K562 (cell line): ENCODE measurements at regions of chr17 and their contacts with region 1.

Region 1: GRCh38 chr17:32253117-32253611 is 12.5 kb upstream of the RHBDL3 start:
- DNase-seq: peak; percentile 78 to 88 (median 80)
- ATAC-seq: peak; percentile 99
- H3K4me3 ChIP-seq: no peak overlapping the region
- H3K27ac ChIP-seq: no peak overlapping the region
- H3K4me1 ChIP-seq: peaks cover 0 to 4% of the 10 kb centered on the region in 2 experiments; a peak in 2 of 5 replicates
- H3K27me3 ChIP-seq: peaks cover 30 to 46% of the 10 kb centered on the region in 2 experiments
- CTCF ChIP-seq: peak; percentile 96 to 99 (median 99)
- EP300 ChIP-seq: no peak
- POLR2A ChIP-seq: no peak
- RAD21 ChIP-seq: peak; percentile 87 to 97

Region 2: DNA sequence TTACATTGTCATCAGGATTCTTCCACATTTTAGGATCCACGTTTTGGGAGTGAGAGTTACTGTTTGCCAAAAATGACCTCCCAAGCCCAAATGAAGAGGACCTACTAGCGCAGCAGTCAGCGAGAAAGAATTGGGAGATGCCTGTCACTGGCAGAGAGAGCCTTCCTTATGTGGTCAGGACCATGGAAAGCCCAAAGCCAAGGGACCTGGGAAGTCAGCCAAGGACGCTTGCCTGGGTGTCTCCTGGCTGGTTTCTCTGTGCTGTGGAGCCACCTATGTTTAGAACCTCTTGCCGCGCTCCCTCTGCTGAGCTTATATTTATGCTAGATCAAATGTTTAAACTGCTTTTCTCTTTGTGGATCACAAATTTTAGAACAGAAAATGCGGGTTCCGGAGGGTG is 12.4 kb before region 1 on chr17:
- CTCF ChIA-PET with region 1: no interaction called
- POLR2A ChIA-PET with region 1: interaction called, 10 read pairs
- in situ Hi-C with region 1: no loop called
- intact Hi-C with region 1: no loop called
- DNase-seq: peak in 1 of 4 experiments; percentile 32
- ATAC-seq: peak; percentile 54; the same call in 2 of the 3 replicates
- H3K4me3 ChIP-seq: no peak overlapping the region
- H3K27ac ChIP-seq: no peak overlapping the region
- H3K4me1 ChIP-seq: no peaks in the 10 kb centered on the region; a peak in 1 of 5 replicates
- H3K27me3 ChIP-seq: no peaks in the 10 kb centered on the region
- CTCF ChIP-seq: peak in 1 of 3 experiments; percentile 14; a peak in 1 of 6 replicates
- EP300 ChIP-seq: no peak
- POLR2A ChIP-seq: no peak
- RAD21 ChIP-seq: peak in 1 of 2 experiments; percentile 18; a peak in 1 of 4 replicates

Region 3: DNA sequence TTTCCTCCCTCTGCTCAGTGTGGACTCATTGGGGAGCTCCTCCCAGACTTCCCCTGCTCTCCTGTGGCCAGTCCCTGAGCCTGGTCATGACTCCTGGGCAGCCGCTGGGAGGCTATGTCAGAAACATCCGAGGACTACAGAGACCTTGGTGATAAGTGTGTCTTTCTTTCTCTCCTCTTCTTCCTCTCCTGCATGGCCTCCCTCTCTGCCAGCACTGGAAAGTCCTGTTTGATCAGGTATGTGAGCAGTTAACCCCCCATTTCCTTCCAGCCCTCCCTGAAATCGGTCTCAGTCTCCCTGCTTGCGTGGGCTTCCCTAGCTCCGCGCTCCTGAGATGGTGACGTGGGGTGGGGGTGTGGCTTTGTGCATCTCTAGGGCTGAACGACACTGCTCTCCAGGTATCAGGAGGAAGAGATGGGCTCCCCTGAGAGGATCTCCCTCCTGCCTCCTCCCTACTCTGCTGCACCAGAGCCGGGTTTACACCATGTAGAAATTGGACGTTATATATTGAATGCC is 14.6 kb after region 1 on chr17:
- CTCF ChIA-PET with region 1: no interaction called
- POLR2A ChIA-PET with region 1: no interaction called
- in situ Hi-C with region 1: no loop called
- intact Hi-C with region 1: no loop called
- DNase-seq: no peak
- ATAC-seq: peak; percentile 72
- H3K4me3 ChIP-seq: no peak overlapping the region
- H3K27ac ChIP-seq: no peak overlapping the region
- H3K4me1 ChIP-seq: peaks cover 0 to 15% of the 10 kb centered on the region in 2 experiments; a peak in 4 of 5 replicates
- H3K27me3 ChIP-seq: peaks cover 54 to 69% of the 10 kb centered on the region in 2 experiments
- CTCF ChIP-seq: no peak
- EP300 ChIP-seq: no peak
- POLR2A ChIP-seq: no peak
- RAD21 ChIP-seq: no peak

Region 4: DNA sequence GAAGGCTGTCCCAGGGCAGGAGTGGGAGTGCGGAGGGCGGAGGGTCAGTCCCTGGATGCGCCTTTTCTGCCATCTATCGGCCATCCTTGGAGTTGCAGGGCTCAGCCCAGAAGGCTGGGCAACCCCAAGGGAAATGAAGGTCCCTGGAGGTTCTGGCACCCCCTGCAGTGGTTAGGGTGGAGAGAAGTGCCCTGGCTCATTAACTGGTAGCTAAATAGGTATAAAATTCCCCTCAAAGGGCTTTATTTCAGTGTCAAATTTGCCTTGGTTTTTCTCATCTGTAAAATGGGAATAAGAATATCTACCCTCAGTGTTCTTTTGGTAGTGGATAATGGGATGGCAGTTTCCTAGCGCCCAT is 66.4 kb after region 1 on chr17:
- CTCF ChIA-PET with region 1: interaction called, 30 read pairs
- POLR2A ChIA-PET with region 1: no interaction called
- in situ Hi-C with region 1: loop called (anchors 5 kb)
- intact Hi-C with region 1: loop called (anchors 1 kb)
- DNase-seq: peak; percentile 81 to 90 (median 85)
- ATAC-seq: peak; percentile 97
- H3K4me3 ChIP-seq: no peak overlapping the region
- H3K27ac ChIP-seq: no peak overlapping the region
- H3K4me1 ChIP-seq: peaks cover 0 to 4% of the 10 kb centered on the region in 2 experiments; a peak in 2 of 5 replicates
- H3K27me3 ChIP-seq: peaks cover 15 to 16% of the 10 kb centered on the region in 2 experiments; a peak in 4 of 5 replicates
- CTCF ChIP-seq: peak; percentile 95 to 98 (median 97)
- EP300 ChIP-seq: no peak
- POLR2A ChIP-seq: no peak
- RAD21 ChIP-seq: peak; percentile 76 to 96